Activated CD4-positive, alpha-beta T cell treated with anti-CD3 and anti-CD28 coated beads, Interleukin-2, amount 10 ng/mL, durations not matched to agents 24 days and 14 days (primary cell): ENCODE measurements at regions of chr1 and their contacts with region 1.

Region 1: GRCh38 chr1:244272471-244273261 is 179.0 kb downstream of the ADSS2 start:
- DNase-seq: peak; percentile 91
- H3K4me3 Mint-ChIP-seq: no peak overlapping the region
- H3K27ac Mint-ChIP-seq: no peak overlapping the region
- H3K4me1 Mint-ChIP-seq: peaks cover 9% of the 10 kb centered on the region
- H3K27me3 Mint-ChIP-seq: peaks cover 1% of the 10 kb centered on the region

Region 2: GRCh38 chr1:243409284-243409683 is 863.4 kb before region 1 on chr1:
- intact Hi-C with region 1: loop called (anchors 10 kb)
- DNase-seq: peak; percentile 54
- H3K4me3 Mint-ChIP-seq: no peak overlapping the region
- H3K27ac Mint-ChIP-seq: no peak overlapping the region
- H3K4me1 Mint-ChIP-seq: peaks cover 21% of the 10 kb centered on the region
- H3K27me3 Mint-ChIP-seq: no peaks in the 10 kb centered on the region

Region 3: GRCh38 chr1:243713470-243714186 is 559.0 kb before region 1 on chr1:
- intact Hi-C with region 1: loop called (anchors 5 kb)
- DNase-seq: no peak
- H3K4me3 Mint-ChIP-seq: no peak overlapping the region
- H3K27ac Mint-ChIP-seq: no peak overlapping the region
- H3K4me1 Mint-ChIP-seq: peaks cover 9% of the 10 kb centered on the region
- H3K27me3 Mint-ChIP-seq: no peaks in the 10 kb centered on the region